SK-N-SH (cell line): ENCODE measurements at regions of chr7 and their contacts with region 1.

Region 1: DNA sequence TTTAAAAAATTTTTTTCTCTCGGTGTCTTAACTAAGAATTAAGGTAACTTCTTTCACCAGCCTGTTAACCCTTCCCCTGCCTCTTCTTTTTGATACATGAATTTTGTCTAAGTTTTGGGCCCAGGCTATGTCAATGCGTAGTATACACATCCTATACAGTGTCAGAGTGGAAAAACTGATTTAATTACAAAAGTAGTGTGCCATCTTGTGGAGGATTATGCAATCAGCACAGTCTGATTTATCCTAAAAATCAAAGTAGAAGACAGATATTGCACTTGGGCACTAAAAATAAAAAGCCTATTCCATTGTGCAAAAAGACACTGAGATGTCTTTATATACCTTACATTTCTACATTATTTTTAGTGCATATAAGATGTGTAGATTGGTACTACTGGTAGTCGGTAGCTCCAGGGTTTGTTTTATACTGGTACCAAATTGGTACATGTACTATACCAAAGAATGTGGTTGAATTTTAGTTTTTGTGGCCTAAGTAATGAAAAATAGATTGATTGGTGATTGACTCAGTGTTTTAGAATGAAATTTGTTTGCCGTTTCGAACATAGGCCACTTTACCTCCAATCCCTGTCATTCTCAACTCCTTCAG is 96.6 kb downstream of the MKLN1 start:
- DNase-seq: peak; percentile 52
- H3K4me3 ChIP-seq: no peak overlapping the region
- H3K27ac ChIP-seq: no peak overlapping the region
- H3K4me1 ChIP-seq: no peaks in the 10 kb centered on the region; a peak in 1 of 4 replicates
- H3K27me3 ChIP-seq: no peaks in the 10 kb centered on the region
- CTCF ChIP-seq: peak; percentile 94
- EP300 ChIP-seq: no peak
- RAD21 ChIP-seq: peak; percentile 85

Region 2: DNA sequence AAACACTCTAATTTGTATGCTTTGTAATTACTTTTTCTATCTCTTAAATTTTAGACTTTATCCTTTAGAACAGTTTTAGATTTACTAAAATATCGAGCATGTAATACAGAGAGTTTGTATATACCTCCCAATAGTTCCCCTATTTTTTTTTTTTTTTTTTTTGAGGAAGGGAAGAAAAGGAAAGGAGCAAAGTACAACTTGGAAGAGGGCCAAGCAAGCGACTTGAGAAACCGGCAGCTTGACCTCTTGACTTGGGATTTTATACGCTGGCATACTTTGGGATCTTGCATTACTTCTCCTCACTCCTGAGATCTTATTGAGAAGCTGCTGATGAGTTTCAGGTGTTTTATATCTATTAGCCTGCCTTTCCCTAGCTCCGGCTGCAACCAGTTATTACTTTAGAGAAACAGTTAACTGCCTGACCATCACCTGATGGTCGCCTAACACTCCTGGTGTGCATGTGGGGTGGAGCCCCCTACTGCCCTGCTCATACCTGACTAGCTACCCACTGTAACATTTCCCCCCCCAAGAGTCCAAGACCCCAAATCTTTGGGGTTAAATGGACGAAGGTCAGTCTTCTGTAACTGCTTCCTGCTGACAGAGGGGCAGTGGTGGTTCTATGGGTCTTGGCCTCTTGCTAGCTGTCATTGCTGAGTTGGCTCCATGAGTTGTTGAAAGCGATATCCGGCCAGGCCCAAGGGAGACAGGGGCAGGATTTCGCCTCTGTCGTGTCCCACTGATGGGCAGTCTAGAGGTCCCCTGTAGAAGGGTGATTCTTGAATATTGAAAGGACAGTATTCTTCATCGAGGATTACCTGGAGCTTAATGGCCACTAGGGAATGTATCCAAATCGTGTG is 68.2 kb before region 1 on chr7:
- CTCF ChIA-PET with region 1: no interaction called
- POLR2A ChIA-PET with region 1: no interaction called
- DNase-seq: no peak
- H3K4me3 ChIP-seq: no peak overlapping the region
- H3K27ac ChIP-seq: no peak overlapping the region
- H3K4me1 ChIP-seq: peaks cover under 1 to 6% of the 10 kb centered on the region in 2 experiments; a peak in 2 of 4 replicates
- H3K27me3 ChIP-seq: no peaks in the 10 kb centered on the region
- CTCF ChIP-seq: no peak
- EP300 ChIP-seq: no peak
- RAD21 ChIP-seq: no peak

Region 3: GRCh38 chr7:131390275-131390674 is 34.0 kb before region 1 on chr7:
- CTCF ChIA-PET with region 1: no interaction called
- POLR2A ChIA-PET with region 1: no interaction called
- DNase-seq: no peak
- H3K4me3 ChIP-seq: no peak overlapping the region
- H3K27ac ChIP-seq: no peak overlapping the region
- H3K4me1 ChIP-seq: no peaks in the 10 kb centered on the region
- H3K27me3 ChIP-seq: no peaks in the 10 kb centered on the region
- CTCF ChIP-seq: no peak
- EP300 ChIP-seq: no peak
- RAD21 ChIP-seq: no peak

Region 4: GRCh38 chr7:131412031-131412430 is 12.3 kb before region 1 on chr7:
- CTCF ChIA-PET with region 1: interaction called, 13 read pairs
- POLR2A ChIA-PET with region 1: interaction called, 3 read pairs
- DNase-seq: no peak
- H3K4me3 ChIP-seq: no peak overlapping the region
- H3K27ac ChIP-seq: no peak overlapping the region
- H3K4me1 ChIP-seq: peaks cover 0 to 4% of the 10 kb centered on the region in 2 experiments; a peak in 2 of 4 replicates
- H3K27me3 ChIP-seq: no peaks in the 10 kb centered on the region
- CTCF ChIP-seq: no peak
- EP300 ChIP-seq: no peak
- RAD21 ChIP-seq: no peak